ENCODE measurements at regions of chr22 and their contacts with region 1.

Region 1: GRCh38 chr22:19730655-19731360 is 7.5 kb downstream of the GP1BB start:
- DNase-seq: peak; percentile 75 to 92 (median 84)
- ATAC-seq: peak; percentile 90
- H3K4me3 ChIP-seq: peak overlapping the region; percentile 31
- H3K4me3 Mint-ChIP-seq: peak overlapping the region; percentile 89
- H3K27ac ChIP-seq: no peak overlapping the region
- H3K27ac Mint-ChIP-seq: no peak overlapping the region
- H3K4me1 ChIP-seq: peaks cover 10% of the 10 kb centered on the region
- H3K4me1 Mint-ChIP-seq: no peaks in the 10 kb centered on the region
- H3K27me3 ChIP-seq: peaks cover 0 to 2% of the 10 kb centered on the region in 2 experiments
- H3K27me3 Mint-ChIP-seq: no peaks in the 10 kb centered on the region
- CTCF ChIP-seq: peak; percentile 96

Region 2: DNA sequence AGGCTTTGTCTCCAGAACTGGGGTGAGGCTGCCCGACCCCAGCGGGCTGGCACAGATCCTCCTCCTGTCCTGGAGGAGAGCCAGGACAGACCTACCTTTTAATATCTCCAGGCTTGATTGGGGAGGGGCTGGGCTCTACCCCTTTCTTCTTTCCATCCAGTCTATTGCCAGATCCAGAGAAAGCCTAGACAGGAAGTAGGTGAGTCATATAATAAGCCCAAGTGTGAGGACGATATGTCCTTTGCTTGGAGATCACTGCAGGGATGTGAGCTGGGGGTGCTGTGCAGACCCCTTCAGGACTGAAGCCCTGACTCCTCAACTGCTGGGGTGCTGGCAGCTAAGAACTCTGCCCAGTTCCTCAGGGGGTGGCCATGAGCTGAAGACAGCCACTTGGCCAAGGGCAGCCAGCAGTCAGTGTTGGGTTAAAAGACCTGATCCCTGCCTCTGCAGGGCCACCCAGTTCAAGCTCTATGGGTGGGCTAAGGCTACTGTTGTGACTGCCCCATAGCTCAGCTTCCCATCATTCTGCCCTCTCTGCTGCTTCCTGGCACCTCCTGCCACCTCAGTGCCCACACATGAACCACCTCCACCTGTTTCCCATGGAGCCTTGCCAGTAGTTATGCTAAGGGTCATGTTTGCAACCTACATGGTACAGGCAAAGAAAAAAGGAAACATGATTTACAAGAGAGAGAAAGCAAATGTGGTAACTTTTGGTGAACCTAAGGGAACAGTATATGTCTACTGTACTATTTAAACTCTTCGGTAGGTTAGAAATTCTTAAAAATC is 275.0 kb before region 1 on chr22:
- CTCF ChIA-PET with region 1: no interaction called
- POLR2A ChIA-PET with region 1: no interaction called
- intact Hi-C with region 1: no loop called
- DNase-seq: no peak
- ATAC-seq: no peak
- H3K4me3 ChIP-seq: no peak overlapping the region
- H3K4me3 Mint-ChIP-seq: no peak overlapping the region
- H3K27ac ChIP-seq: no peak overlapping the region
- H3K27ac Mint-ChIP-seq: no peak overlapping the region
- H3K4me1 ChIP-seq: no peaks in the 10 kb centered on the region
- H3K4me1 Mint-ChIP-seq: no peaks in the 10 kb centered on the region
- H3K27me3 ChIP-seq: no peaks in the 10 kb centered on the region
- H3K27me3 Mint-ChIP-seq: no peaks in the 10 kb centered on the region
- CTCF ChIP-seq: no peak

Region 3: DNA sequence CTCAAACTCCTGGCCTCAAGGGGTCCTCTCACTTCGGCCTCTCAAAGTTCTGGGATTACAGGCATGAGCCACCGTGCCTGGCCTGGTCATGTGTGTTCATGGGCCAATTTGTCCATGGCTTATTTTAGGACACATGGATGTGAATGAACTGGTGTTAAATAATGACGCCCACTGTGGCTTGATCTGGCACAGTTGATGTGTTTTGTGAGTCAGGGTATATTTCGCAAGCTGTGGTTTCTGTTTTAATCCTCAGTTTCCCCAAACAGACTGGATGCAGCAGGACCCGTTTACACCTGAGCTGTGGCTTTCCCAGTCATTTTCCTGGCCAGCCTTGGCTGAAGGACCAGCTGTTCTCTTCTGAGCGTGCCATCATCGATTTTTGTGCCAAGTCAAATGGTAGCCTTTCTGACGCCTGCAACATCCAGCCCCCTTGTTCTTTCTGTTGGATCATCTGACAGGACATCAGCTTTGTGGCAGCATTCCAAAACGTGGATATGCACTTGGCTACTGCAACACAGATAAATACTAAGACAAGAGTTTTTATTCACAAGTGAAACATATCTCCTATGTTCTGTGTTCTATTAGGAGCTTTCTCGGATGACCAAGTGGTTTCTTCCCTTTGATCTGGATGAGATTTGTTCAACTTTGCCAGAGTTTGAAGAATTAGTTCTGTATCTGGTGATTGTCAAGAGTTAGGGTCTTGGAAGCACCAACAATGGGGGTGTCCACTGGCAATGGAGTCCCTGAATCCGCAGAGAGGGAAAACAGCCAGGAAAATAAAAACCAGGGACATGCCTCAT is 56.5 kb before region 1 on chr22:
- CTCF ChIA-PET with region 1: no interaction called
- POLR2A ChIA-PET with region 1: no interaction called
- intact Hi-C with region 1: no loop called
- DNase-seq: no peak
- ATAC-seq: no peak
- H3K4me3 ChIP-seq: no peak overlapping the region
- H3K4me3 Mint-ChIP-seq: no peak overlapping the region
- H3K27ac ChIP-seq: no peak overlapping the region
- H3K27ac Mint-ChIP-seq: no peak overlapping the region
- H3K4me1 ChIP-seq: no peaks in the 10 kb centered on the region
- H3K4me1 Mint-ChIP-seq: no peaks in the 10 kb centered on the region
- H3K27me3 ChIP-seq: peaks cover 7 to 8% of the 10 kb centered on the region in 2 experiments
- H3K27me3 Mint-ChIP-seq: peaks cover 23% of the 10 kb centered on the region
- CTCF ChIP-seq: no peak

Region 4: GRCh38 chr22:19756288-19757128 is 25.7 kb after region 1 on chr22:
- CTCF ChIA-PET with region 1: interaction called, 8 read pairs
- POLR2A ChIA-PET with region 1: no interaction called
- intact Hi-C with region 1: loop called in 1 of 2 experiments (anchors 2 kb)
- DNase-seq: peak; percentile 59 to 87 (median 73)
- ATAC-seq: peak; percentile 85
- H3K4me3 ChIP-seq: peak overlapping the region; percentile 40
- H3K4me3 Mint-ChIP-seq: peak overlapping the region; percentile 87
- H3K27ac ChIP-seq: no peak overlapping the region
- H3K27ac Mint-ChIP-seq: no peak overlapping the region
- H3K4me1 ChIP-seq: peaks cover 32% of the 10 kb centered on the region
- H3K4me1 Mint-ChIP-seq: peaks cover 33% of the 10 kb centered on the region
- H3K27me3 ChIP-seq: peaks cover 45 to 59% of the 10 kb centered on the region in 2 experiments
- H3K27me3 Mint-ChIP-seq: peaks cover 68% of the 10 kb centered on the region
- CTCF ChIP-seq: peak; percentile 62

Region 5: GRCh38 chr22:19772422-19773324 is 41.9 kb after region 1 on chr22:
- CTCF ChIA-PET with region 1: no interaction called
- POLR2A ChIA-PET with region 1: no interaction called
- intact Hi-C with region 1: no loop called
- DNase-seq: no peak
- ATAC-seq: no peak
- H3K4me3 ChIP-seq: no peak overlapping the region
- H3K4me3 Mint-ChIP-seq: no peak overlapping the region
- H3K27ac ChIP-seq: no peak overlapping the region
- H3K27ac Mint-ChIP-seq: no peak overlapping the region
- H3K4me1 ChIP-seq: peaks cover 10% of the 10 kb centered on the region
- H3K4me1 Mint-ChIP-seq: peaks cover 10% of the 10 kb centered on the region
- H3K27me3 ChIP-seq: peaks cover 54 to 60% of the 10 kb centered on the region in 2 experiments
- H3K27me3 Mint-ChIP-seq: peaks cover 71% of the 10 kb centered on the region
- CTCF ChIP-seq: no peak

Region 6: GRCh38 chr22:19854778-19855503 is 124.1 kb after region 1 on chr22 and contains the starts of genes GNB1L and RTL10:
- CTCF ChIA-PET with region 1: interaction called, 13 read pairs
- POLR2A ChIA-PET with region 1: no interaction called
- intact Hi-C with region 1: no loop called
- DNase-seq: peak; percentile 92 to 99 (median 96)
- ATAC-seq: peak; percentile 89
- H3K4me3 ChIP-seq: peak within 1 kb of the TSS; percentile 99
- H3K4me3 Mint-ChIP-seq: peak within 1 kb of the TSS; percentile 95
- H3K27ac ChIP-seq: peak within 1 kb of the TSS; percentile 78 to 90
- H3K27ac Mint-ChIP-seq: peak within 1 kb of the TSS; percentile 96
- H3K4me1 ChIP-seq: peaks cover 58% of the 10 kb centered on the region
- H3K4me1 Mint-ChIP-seq: peaks cover 71% of the 10 kb centered on the region
- H3K27me3 ChIP-seq: no peaks in the 10 kb centered on the region
- H3K27me3 Mint-ChIP-seq: no peaks in the 10 kb centered on the region
- CTCF ChIP-seq: no peak
- total RNA-seq, gene GNB1L: 3.0 to 6.5 TPM
- total RNA-seq, gene RTL10: 24.7 TPM

Region 7: DNA sequence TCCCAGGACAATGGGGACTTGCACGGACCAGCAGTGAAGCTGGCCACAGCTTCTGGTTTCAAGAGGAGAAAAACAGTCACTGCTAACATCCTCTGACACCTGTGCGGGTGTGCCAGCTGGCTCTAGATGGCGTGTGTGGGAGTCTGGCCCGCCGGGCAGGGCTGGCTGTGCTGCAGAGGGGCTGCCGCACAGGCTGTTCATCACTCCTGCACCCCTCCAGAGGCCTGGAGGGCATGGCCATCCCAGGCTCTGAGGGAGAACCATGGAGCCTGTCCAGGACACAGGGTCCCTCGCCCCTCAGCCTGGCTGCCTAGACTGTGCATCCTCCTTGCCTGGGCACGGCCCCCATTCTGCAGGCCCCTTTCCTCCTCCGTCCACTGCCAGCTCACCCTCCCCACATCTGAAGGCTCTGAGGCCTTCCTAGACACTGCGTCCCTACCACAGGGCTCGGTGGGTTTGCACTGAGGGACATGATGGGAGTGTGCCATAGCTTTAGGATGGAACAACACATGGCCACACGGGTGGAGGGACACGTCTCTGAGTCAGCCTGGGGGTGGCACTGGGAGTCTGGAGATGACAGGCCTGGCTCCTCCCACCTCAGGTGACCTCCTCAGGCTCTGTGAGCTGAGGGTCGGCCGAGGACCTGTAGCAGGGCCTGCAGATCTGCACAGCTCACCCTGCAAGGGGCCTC is 166.0 kb after region 1 on chr22:
- CTCF ChIA-PET with region 1: interaction called, 19 read pairs
- POLR2A ChIA-PET with region 1: interaction called, 9 read pairs
- intact Hi-C with region 1: no loop called
- DNase-seq: peak in 11 of 14 experiments; percentile 24 to 73 (median 48)
- ATAC-seq: peak; percentile 24
- H3K4me3 ChIP-seq: no peak overlapping the region
- H3K4me3 Mint-ChIP-seq: peak overlapping the region; percentile 45
- H3K27ac ChIP-seq: no peak overlapping the region
- H3K27ac Mint-ChIP-seq: peak overlapping the region; percentile 97
- H3K4me1 ChIP-seq: peaks cover 59% of the 10 kb centered on the region
- H3K4me1 Mint-ChIP-seq: peaks cover 53% of the 10 kb centered on the region
- H3K27me3 ChIP-seq: no peaks in the 10 kb centered on the region
- H3K27me3 Mint-ChIP-seq: no peaks in the 10 kb centered on the region
- CTCF ChIP-seq: peak; percentile 34

Region 8: GRCh38 chr22:19909350-19910179 is 178.8 kb after region 1 on chr22:
- CTCF ChIA-PET with region 1: interaction called, 69 read pairs
- POLR2A ChIA-PET with region 1: interaction called, 6 read pairs
- intact Hi-C with region 1: loop called (anchors 1 kb)
- DNase-seq: peak; percentile 76 to 94 (median 83)
- ATAC-seq: peak; percentile 93
- H3K4me3 ChIP-seq: no peak overlapping the region
- H3K4me3 Mint-ChIP-seq: no peak overlapping the region
- H3K27ac ChIP-seq: no peak overlapping the region
- H3K27ac Mint-ChIP-seq: peak overlapping the region; percentile 19
- H3K4me1 ChIP-seq: peaks cover 7% of the 10 kb centered on the region
- H3K4me1 Mint-ChIP-seq: peaks cover 10% of the 10 kb centered on the region
- H3K27me3 ChIP-seq: no peaks in the 10 kb centered on the region
- H3K27me3 Mint-ChIP-seq: no peaks in the 10 kb centered on the region
- CTCF ChIP-seq: peak; percentile 77

Region 9: GRCh38 chr22:19941365-19942082 is 210.7 kb after region 1 on chr22 and contains the starts of genes COMT and TXNRD2:
- CTCF ChIA-PET with region 1: no interaction called
- POLR2A ChIA-PET with region 1: no interaction called
- intact Hi-C with region 1: loop called in 1 of 2 experiments (anchors 2 kb)
- DNase-seq: peak; percentile 56 to 83 (median 68)
- ATAC-seq: peak; percentile 84
- H3K4me3 ChIP-seq: peak within 1 kb of the TSS; percentile 83
- H3K4me3 Mint-ChIP-seq: peak within 1 kb of the TSS; percentile 97
- H3K27ac ChIP-seq: peak within 1 kb of the TSS; percentile 47 to 62
- H3K27ac Mint-ChIP-seq: peak within 1 kb of the TSS; percentile 92
- H3K4me1 ChIP-seq: peaks cover 34% of the 10 kb centered on the region
- H3K4me1 Mint-ChIP-seq: peaks cover 42% of the 10 kb centered on the region
- H3K27me3 ChIP-seq: no peaks in the 10 kb centered on the region
- H3K27me3 Mint-ChIP-seq: no peaks in the 10 kb centered on the region
- CTCF ChIP-seq: no peak
- total RNA-seq, gene COMT: 11.3 to 11.4 TPM
- total RNA-seq, gene TXNRD2: 18.6 to 19.5 TPM

Measured in CD4-positive, alpha-beta T cell (primary cell).